Prostate gland (tissue), 2 donors: ENCODE measurements at regions of chr19 and their contacts with region 1.

Region 1: DNA sequence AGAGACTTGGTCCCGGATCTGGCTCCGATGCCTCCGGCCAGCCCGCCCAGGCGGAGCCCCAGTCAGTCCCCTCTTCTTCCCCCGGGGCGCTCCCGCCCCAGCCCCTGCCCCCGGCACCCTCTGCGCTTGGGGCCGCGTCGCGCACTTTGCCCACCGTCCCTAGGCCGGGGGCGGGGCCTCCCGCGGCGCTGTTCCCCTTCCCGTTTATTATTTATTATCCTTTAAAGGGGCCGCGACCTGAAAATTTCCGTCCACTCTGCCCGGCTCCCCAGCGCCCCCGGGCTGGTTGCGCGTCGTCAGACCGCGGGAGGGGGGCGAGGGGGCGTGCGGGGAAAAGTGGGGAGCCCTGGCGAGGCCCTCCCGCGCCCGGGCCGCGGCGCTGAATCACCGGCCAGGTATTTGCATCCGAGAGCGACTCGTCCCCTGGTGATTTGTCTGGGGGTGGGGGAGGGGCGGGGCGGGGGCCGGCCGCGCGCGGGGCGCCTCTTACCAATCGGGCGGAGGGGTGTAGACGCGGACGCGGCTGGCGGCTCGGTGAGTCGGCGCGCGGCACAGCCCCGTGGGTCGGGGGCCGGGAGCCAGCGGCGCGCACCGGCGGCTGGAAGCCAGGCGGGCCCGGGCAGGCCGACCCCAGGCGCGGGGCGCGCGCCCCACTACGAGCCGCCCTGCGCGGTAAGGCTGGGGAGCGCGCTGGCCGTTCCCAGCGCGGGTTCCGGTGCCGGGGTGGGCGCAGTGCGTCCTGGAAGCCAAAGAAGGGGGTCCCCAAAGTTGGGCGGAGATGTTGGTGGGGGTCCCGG is at the start of gene ARID3A:
- DNase-seq: peak; percentile 68
- H3K4me3 ChIP-seq: peak within 1 kb of the TSS; percentile 87 to 92
- H3K27ac ChIP-seq: peak within 1 kb of the TSS; percentile 85 to 87
- H3K4me1 ChIP-seq: peaks cover 3% of the 10 kb centered on the region
- H3K27me3 ChIP-seq: no peaks in the 10 kb centered on the region
- CTCF ChIP-seq: peak in 1 of 4 experiments; percentile 12
- POLR2A ChIP-seq: no peak
- total RNA-seq, gene ARID3A: 3.8 to 18.7 TPM

Region 2: DNA sequence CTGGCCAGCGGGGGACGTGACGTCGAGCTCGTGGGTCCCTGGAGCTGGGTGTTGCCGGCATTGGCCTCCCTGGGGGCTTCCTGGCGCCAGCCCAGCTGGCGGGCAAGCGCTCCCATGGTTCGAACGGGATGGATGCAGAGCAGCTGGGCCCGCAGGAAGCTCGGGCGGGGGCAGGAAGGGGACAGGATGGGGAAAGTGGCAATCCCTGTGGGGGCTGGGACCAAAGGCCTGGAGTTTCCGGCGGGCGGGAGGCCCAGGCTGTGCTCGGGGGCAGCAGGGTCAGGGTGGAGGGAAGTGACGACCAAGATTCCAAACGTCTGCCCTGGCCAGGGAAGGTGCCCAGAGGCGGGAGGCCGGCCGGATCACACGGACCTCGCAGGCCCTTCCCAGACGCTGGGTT is 197.7 kb before region 1 on chr19:
- intact Hi-C with region 1: no loop called
- DNase-seq: no peak
- H3K4me3 ChIP-seq: no peak overlapping the region
- H3K27ac ChIP-seq: peak overlapping the region in 1 of 2 donors; percentile 38
- H3K4me1 ChIP-seq: no peaks in the 10 kb centered on the region
- H3K27me3 ChIP-seq: no peaks in the 10 kb centered on the region
- CTCF ChIP-seq: no peak
- POLR2A ChIP-seq: no peak

Region 3: DNA sequence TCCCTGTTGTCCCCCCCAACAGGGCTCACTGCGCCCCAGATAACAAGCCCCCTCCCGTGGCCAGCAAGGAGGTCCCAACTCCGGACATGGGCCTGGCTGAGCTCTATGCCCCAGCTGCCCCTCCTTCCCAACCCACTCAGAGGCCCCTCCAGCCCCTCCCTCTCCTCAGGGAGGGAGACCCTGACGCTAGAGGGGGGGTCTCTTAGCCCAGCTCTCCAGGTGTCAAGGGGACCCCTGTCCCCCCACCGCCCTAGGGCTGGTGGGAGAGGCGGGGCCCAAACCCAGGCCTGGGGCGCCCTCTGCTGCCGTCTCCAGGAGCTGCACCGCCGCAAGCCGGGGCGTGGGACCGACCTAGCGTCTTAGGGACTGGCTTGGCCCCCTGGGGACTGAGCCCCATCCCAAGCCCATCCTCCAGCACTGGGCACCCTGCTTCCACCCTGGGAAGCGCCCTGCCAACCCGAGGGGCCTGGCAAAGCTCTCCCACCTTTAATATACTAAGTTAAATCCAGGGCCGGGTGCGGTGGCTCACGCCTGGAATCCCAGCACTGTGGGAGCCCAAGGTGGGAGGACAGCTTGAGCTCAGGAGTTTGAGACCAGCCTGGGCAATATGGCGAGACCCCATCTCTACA is 75.9 kb after region 1 on chr19:
- intact Hi-C with region 1: loop called (anchors 1 kb)
- DNase-seq: no peak
- H3K4me3 ChIP-seq: no peak overlapping the region
- H3K27ac ChIP-seq: no peak overlapping the region
- H3K4me1 ChIP-seq: peaks cover 6% of the 10 kb centered on the region
- H3K27me3 ChIP-seq: peaks cover 13% of the 10 kb centered on the region
- CTCF ChIP-seq: peak; percentile 44 to 86 (median 66)
- POLR2A ChIP-seq: peak; percentile 8

Region 4: DNA sequence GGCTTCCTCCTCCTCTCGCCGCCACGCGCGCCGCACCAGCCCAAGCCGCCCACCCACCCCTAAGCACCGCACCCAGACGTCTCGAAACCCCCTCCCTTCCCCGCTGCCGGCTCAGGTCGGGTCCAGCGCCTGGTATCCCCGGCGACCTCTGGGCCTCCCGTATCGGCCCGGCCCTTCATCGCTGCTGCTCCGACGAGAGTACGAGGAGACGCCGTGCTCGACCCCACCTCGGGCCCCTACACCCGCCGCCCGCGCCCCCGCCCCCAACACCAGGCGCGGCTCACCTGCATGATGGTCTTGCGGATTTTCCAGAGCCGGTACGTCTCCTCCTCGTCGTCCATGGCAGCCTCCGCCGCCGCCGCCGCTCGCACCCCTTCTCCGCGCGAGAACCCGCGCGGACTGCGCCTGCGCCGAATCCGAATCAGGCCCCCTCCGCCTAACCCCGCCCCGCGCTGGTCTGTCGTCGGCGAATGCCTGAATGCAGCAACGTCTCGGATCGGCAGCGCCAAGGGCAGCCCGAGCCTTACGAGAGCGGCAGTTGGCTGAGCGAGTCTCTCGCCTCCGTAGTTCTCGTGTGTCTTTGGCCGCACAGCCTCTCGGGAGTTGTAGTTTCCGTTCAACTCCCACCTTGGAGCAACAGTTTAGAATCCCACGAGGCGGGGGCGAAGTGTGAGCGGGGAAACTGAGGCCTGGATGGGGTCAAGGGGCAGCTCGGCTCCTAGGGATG is 169.4 kb after region 1 on chr19 and contains the start of gene POLR2E:
- intact Hi-C with region 1: no loop called
- DNase-seq: peak; percentile 98
- H3K4me3 ChIP-seq: peak within 1 kb of the TSS; percentile 79 to 85
- H3K27ac ChIP-seq: peak within 1 kb of the TSS; percentile 63 to 69
- H3K4me1 ChIP-seq: peaks cover 7% of the 10 kb centered on the region
- H3K27me3 ChIP-seq: no peaks in the 10 kb centered on the region
- CTCF ChIP-seq: no peak
- POLR2A ChIP-seq: peak; percentile 89
- total RNA-seq, gene POLR2E: 152 to 169 TPM